Naive thymus-derived CD4-positive, alpha-beta T cell (primary cell): ENCODE measurements at regions of chr5 and their contacts with region 1.

Region 1: DNA sequence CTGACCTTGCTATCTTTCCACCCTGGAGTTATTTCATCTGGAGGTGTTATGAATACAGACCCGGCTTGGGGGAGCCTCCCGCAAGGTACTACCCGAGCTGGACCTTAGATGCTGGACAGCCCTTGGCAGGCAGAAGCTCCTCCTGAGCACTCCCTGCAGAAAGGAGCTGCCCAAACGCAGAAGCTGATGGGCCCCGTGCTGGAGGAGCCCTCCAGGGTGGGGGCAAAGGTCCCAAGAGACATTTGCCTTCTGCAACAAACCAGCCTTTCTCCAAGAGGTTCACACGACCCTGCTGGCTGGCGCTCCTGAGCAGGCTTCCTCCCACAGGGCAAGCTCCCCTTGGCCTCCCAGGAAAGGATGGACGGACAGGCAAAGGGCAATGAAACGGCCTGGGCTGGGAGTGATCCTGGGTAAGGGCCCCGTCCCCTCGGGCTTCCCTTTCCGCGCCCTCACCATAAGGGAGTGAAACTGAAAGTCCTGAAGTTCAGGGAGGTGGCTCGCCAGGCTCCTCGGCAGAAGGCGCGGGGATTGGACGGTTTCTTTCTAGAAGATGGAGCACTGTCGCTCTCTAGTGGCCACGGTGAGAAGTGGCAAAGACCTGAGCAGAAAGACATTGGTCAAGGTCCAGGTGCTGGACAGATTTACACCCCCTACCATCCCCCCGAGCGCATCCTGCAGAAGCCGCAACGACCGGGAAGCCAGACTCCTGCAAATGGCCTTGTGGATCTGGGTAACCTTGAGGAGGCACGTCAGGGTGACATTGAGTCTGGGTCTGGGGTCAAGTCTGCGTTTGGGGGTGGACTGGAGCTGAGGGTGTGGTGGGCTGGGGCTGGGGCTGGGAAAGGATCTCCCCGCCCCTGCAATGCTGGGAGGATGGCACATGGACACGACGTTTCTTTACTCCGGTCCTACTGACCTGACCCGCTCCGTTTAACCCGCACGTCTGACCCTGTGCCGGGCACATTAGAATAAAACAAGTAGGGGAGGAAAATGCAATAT is 56.4 kb downstream of the NEURL1B start:
- DNase-seq: peak; percentile 64 to 85 (median 80)
- ATAC-seq: peak; percentile 98
- H3K4me3 ChIP-seq: peak overlapping the region; percentile 78
- H3K4me3 Mint-ChIP-seq: peak overlapping the region; percentile 77 to 96 (median 94)
- H3K27ac ChIP-seq: peak overlapping the region; percentile 72
- H3K27ac Mint-ChIP-seq: peak overlapping the region; percentile 88 to 98 (median 95)
- H3K4me1 ChIP-seq: peaks cover 5 to 10% of the 10 kb centered on the region in 2 donors
- H3K4me1 Mint-ChIP-seq: peaks cover 0 to 24% (median 20%) of the 10 kb centered on the region in 7 donors
- H3K27me3 ChIP-seq: no peaks in the 10 kb centered on the region
- H3K27me3 Mint-ChIP-seq: peaks cover 6 to 26% (median 15%) of the 10 kb centered on the region in 5 donors

Region 2: GRCh38 chr5:170848033-170848432 is 1849.4 kb before region 1 on chr5:
- CTCF ChIA-PET with region 1: no interaction called
- POLR2A ChIA-PET with region 1: no interaction called
- intact Hi-C with region 1: no loop called
- DNase-seq: no peak
- ATAC-seq: no peak
- H3K4me3 ChIP-seq: no peak overlapping the region
- H3K4me3 Mint-ChIP-seq: no peak overlapping the region
- H3K27ac ChIP-seq: no peak overlapping the region
- H3K27ac Mint-ChIP-seq: no peak overlapping the region
- H3K4me1 ChIP-seq: no peaks in the 10 kb centered on the region
- H3K4me1 Mint-ChIP-seq: no peaks in the 10 kb centered on the region
- H3K27me3 ChIP-seq: peaks cover 0 to 3% of the 10 kb centered on the region in 2 donors
- H3K27me3 Mint-ChIP-seq: peaks cover 1 to 24% (median 9%) of the 10 kb centered on the region in 5 donors

Region 3: GRCh38 chr5:171484460-171484899 is 1212.9 kb before region 1 on chr5:
- CTCF ChIA-PET with region 1: no interaction called
- POLR2A ChIA-PET with region 1: no interaction called
- intact Hi-C with region 1: loop called in 1 of 2 experiments (anchors 1 kb)
- DNase-seq: peak in 7 of 9 donors; percentile 2 to 42 (median 17)
- ATAC-seq: peak; percentile 69
- H3K4me3 ChIP-seq: no peak overlapping the region
- H3K4me3 Mint-ChIP-seq: no peak overlapping the region
- H3K27ac ChIP-seq: no peak overlapping the region
- H3K27ac Mint-ChIP-seq: peak overlapping the region in 1 of 9 donors; percentile 41
- H3K4me1 ChIP-seq: peaks cover 0 to 3% of the 10 kb centered on the region in 2 donors
- H3K4me1 Mint-ChIP-seq: peaks cover 0 to 8% (median 0%) of the 10 kb centered on the region in 7 donors
- H3K27me3 ChIP-seq: no peaks in the 10 kb centered on the region
- H3K27me3 Mint-ChIP-seq: peaks cover 3 to 15% (median 9%) of the 10 kb centered on the region in 5 donors

Region 4: DNA sequence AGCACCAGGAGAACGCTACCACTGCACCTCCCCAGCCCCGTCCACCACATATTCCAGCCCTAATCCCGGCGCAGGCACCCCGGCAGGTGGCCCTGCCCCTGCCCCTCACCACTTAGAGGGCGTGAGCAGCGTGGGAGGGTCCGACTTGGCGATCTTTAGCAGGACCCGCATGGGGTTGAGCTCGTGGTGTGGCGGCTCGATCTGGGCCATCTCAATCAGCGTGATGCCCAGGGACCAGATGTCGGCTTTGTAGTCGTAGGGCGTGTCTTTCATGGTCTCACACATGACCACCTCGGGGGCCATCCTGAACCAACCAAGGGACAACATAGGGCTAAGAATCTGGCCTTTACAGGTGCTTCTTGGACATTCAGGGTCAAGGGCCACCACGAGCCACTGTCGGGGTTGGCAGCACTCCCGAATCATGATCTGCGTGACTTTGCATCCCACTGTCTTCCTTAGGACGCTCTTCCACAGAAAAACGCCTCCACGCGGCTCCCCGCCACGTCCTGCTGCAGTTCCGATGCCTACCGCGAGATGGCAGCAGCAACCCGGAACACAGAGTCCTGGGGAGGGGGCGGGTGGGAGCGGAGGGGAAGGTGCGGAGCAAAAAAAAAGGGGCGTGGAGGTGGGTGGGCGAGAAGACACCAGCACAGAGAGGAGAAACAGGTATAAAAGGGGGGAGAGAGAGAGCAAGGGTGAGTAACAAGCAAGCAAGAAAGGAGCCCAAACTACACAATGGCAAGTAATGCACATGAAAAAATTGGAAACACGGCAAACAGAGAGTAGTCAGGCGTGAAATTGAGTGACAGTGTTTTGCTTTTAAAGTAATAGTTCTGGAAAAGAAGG is 590.7 kb before region 1 on chr5:
- CTCF ChIA-PET with region 1: no interaction called
- POLR2A ChIA-PET with region 1: no interaction called
- intact Hi-C with region 1: loop called in 1 of 2 experiments (anchors 1 kb)
- DNase-seq: peak; percentile 31 to 78 (median 59)
- ATAC-seq: peak; percentile 43
- H3K4me3 ChIP-seq: no peak overlapping the region
- H3K4me3 Mint-ChIP-seq: peak overlapping the region in 8 of 10 donors; percentile 20 to 49 (median 39)
- H3K27ac ChIP-seq: peak overlapping the region; percentile 24
- H3K27ac Mint-ChIP-seq: peak overlapping the region; percentile 18 to 88 (median 81)
- H3K4me1 ChIP-seq: peaks cover 31 to 37% of the 10 kb centered on the region in 2 donors
- H3K4me1 Mint-ChIP-seq: peaks cover 23 to 61% (median 43%) of the 10 kb centered on the region in 7 donors
- H3K27me3 ChIP-seq: no peaks in the 10 kb centered on the region
- H3K27me3 Mint-ChIP-seq: no peaks in the 10 kb centered on the region

Region 5: DNA sequence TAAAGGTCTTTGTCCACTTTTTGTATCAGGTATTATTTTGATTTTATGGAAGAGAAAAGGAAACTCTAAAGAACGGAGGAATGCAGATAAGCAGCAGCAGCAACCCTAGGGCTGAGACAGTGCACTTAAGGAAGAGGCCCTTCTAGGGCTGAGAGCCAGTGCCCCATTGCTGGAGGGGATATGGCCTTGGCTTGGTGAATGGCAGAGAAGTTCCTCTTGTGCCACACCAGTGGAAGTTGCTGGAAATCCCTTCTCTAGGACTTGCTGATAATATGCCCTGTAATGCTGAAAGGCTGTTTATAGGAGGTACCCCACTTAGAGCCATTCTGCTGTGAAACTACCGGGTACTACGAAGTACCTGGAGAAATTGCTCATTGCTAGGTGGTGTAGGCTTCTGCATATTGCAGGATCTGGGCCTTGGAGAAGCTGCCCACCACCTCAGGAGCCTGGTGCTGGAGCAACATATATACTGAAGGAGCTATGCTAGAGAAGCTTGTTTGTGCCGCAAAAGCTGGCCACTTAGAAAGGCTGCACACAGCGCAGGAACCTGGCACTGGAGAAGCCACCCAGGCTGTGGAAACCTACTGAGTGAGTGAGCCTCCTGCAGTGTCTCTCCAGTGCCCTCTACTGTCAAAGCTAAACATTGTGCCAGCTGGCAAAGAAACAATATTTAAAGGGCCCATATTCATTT is 404.2 kb before region 1 on chr5:
- CTCF ChIA-PET with region 1: interaction called, 6 read pairs
- POLR2A ChIA-PET with region 1: no interaction called
- intact Hi-C with region 1: loop called in 1 of 2 experiments (anchors 1 kb)
- DNase-seq: peak; percentile 20 to 77 (median 67)
- ATAC-seq: peak; percentile 100
- H3K4me3 ChIP-seq: no peak overlapping the region
- H3K4me3 Mint-ChIP-seq: no peak overlapping the region
- H3K27ac ChIP-seq: no peak overlapping the region
- H3K27ac Mint-ChIP-seq: peak overlapping the region in 1 of 9 donors; percentile 43
- H3K4me1 ChIP-seq: no peaks in the 10 kb centered on the region
- H3K4me1 Mint-ChIP-seq: peaks cover 0 to 4% (median 2%) of the 10 kb centered on the region in 7 donors
- H3K27me3 ChIP-seq: no peaks in the 10 kb centered on the region
- H3K27me3 Mint-ChIP-seq: peaks cover 0 to 12% (median 0%) of the 10 kb centered on the region in 5 donors

Region 6: GRCh38 chr5:172459783-172460165 is 237.6 kb before region 1 on chr5:
- CTCF ChIA-PET with region 1: interaction called, 11 read pairs
- POLR2A ChIA-PET with region 1: no interaction called
- intact Hi-C with region 1: loop called (anchors 1 kb)
- DNase-seq: no peak
- ATAC-seq: no peak
- H3K4me3 ChIP-seq: no peak overlapping the region
- H3K4me3 Mint-ChIP-seq: no peak overlapping the region
- H3K27ac ChIP-seq: no peak overlapping the region
- H3K27ac Mint-ChIP-seq: no peak overlapping the region
- H3K4me1 ChIP-seq: peaks cover 0 to 5% of the 10 kb centered on the region in 2 donors
- H3K4me1 Mint-ChIP-seq: peaks cover 10 to 24% (median 18%) of the 10 kb centered on the region in 7 donors
- H3K27me3 ChIP-seq: peaks cover 0 to 3% of the 10 kb centered on the region in 2 donors
- H3K27me3 Mint-ChIP-seq: peaks cover 0 to 29% (median 6%) of the 10 kb centered on the region in 5 donors

Region 7: GRCh38 chr5:172479044-172479783 is 218.2 kb before region 1 on chr5:
- CTCF ChIA-PET with region 1: interaction called, 12 read pairs
- POLR2A ChIA-PET with region 1: no interaction called
- intact Hi-C with region 1: loop called in 1 of 2 experiments (anchors 1 kb)
- DNase-seq: peak in 8 of 9 donors; percentile 27 to 63 (median 44)
- ATAC-seq: peak; percentile 90
- H3K4me3 ChIP-seq: no peak overlapping the region
- H3K4me3 Mint-ChIP-seq: no peak overlapping the region
- H3K27ac ChIP-seq: no peak overlapping the region
- H3K27ac Mint-ChIP-seq: no peak overlapping the region
- H3K4me1 ChIP-seq: no peaks in the 10 kb centered on the region
- H3K4me1 Mint-ChIP-seq: no peaks in the 10 kb centered on the region
- H3K27me3 ChIP-seq: no peaks in the 10 kb centered on the region
- H3K27me3 Mint-ChIP-seq: peaks cover 0 to 9% (median 0%) of the 10 kb centered on the region in 5 donors

Region 8: GRCh38 chr5:172666251-172666650 is 31.2 kb before region 1 on chr5:
- CTCF ChIA-PET with region 1: no interaction called
- POLR2A ChIA-PET with region 1: no interaction called
- intact Hi-C with region 1: loop called in 1 of 2 experiments (anchors 1 kb)
- DNase-seq: no peak
- ATAC-seq: no peak
- H3K4me3 ChIP-seq: no peak overlapping the region
- H3K4me3 Mint-ChIP-seq: no peak overlapping the region
- H3K27ac ChIP-seq: no peak overlapping the region
- H3K27ac Mint-ChIP-seq: no peak overlapping the region
- H3K4me1 ChIP-seq: no peaks in the 10 kb centered on the region
- H3K4me1 Mint-ChIP-seq: peaks cover 0 to 3% (median 0%) of the 10 kb centered on the region in 7 donors
- H3K27me3 ChIP-seq: no peaks in the 10 kb centered on the region
- H3K27me3 Mint-ChIP-seq: peaks cover 0 to 4% (median 0%) of the 10 kb centered on the region in 5 donors